ENCODE measurements at regions of chr9 and their contacts with region 1.

Region 1: GRCh38 chr9:94668418-94668932 is 29.2 kb upstream of the FBP1 start:
- DNase-seq: no peak
- H3K4me3 Mint-ChIP-seq: peak overlapping the region; percentile 22
- H3K27ac Mint-ChIP-seq: no peak overlapping the region
- H3K4me1 Mint-ChIP-seq: peaks cover 10% of the 10 kb centered on the region
- H3K27me3 Mint-ChIP-seq: peaks cover 40% of the 10 kb centered on the region

Region 2: DNA sequence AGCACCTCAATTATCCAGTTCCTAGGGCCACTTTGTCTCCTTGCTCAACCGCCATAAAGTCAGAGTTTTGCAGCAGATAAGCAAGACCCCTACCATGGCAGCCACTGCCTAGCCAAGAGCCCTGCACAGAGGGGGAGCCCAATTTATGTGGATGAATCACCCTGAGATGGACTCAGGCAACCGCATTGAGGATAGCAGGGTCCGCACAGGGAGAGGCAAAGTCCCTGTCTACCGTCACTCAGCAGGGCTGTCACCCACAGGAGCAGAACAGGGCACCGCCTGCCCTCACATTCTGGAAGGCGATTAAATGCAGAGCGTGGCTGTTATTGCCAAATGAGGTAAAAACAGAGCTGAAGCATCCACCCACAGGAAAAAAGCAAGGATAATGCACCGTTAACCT is 76.6 kb before region 1 on chr9:
- CTCF ChIA-PET with region 1: no interaction called
- POLR2A ChIA-PET with region 1: no interaction called
- DNase-seq: no peak
- H3K4me3 Mint-ChIP-seq: no peak overlapping the region
- H3K27ac Mint-ChIP-seq: no peak overlapping the region
- H3K4me1 Mint-ChIP-seq: peaks cover 5% of the 10 kb centered on the region
- H3K27me3 Mint-ChIP-seq: peaks cover 10% of the 10 kb centered on the region

Region 3: DNA sequence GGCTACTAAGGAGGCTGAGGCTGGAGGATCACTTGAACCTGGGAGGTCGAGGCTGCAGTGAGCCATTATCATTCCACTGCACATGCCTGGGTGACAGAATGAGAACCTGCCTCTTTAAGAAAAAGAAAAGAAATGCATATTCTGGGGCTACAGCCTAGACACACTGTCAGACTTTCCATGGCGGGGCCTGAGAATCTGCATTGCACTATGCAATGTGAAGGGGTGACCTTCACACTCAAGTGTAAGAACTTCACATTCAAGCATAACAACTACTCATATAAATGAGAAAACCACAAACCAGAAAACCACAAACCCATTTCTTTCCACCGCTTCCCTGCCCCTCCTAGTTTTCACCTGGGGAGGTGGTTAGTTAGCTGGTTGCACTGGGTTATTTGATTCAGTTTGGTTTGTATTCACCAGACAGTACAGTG is 56.8 kb before region 1 on chr9:
- CTCF ChIA-PET with region 1: no interaction called
- POLR2A ChIA-PET with region 1: no interaction called
- DNase-seq: peak; percentile 27
- H3K4me3 Mint-ChIP-seq: no peak overlapping the region
- H3K27ac Mint-ChIP-seq: no peak overlapping the region
- H3K4me1 Mint-ChIP-seq: peaks cover 8% of the 10 kb centered on the region
- H3K27me3 Mint-ChIP-seq: peaks cover 31% of the 10 kb centered on the region

Region 4: DNA sequence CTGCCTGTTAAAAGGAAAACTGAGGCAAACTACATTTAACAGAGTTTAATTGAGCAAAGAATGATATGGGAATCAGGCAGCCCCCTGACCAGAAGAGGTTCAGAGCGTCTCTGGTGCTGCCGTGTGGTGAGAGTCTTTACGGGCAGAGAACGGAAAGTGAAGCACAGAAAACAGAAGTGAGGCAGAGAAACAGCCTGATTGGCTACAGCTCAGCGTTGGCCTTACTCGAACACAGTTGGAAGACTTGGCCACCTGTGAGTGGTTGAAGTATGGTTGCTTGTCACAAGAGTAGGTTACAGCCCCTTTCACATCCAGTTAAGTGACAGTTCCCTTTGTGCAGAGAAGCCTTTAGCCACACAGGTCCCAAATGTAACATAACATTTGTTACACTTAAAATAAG is 12.3 kb before region 1 on chr9:
- CTCF ChIA-PET with region 1: interaction called, 14 read pairs
- POLR2A ChIA-PET with region 1: no interaction called
- DNase-seq: peak; percentile 52
- H3K4me3 Mint-ChIP-seq: peak overlapping the region; percentile 62
- H3K27ac Mint-ChIP-seq: peak overlapping the region; percentile 55
- H3K4me1 Mint-ChIP-seq: peaks cover 19% of the 10 kb centered on the region
- H3K27me3 Mint-ChIP-seq: peaks cover 19% of the 10 kb centered on the region

Region 5: DNA sequence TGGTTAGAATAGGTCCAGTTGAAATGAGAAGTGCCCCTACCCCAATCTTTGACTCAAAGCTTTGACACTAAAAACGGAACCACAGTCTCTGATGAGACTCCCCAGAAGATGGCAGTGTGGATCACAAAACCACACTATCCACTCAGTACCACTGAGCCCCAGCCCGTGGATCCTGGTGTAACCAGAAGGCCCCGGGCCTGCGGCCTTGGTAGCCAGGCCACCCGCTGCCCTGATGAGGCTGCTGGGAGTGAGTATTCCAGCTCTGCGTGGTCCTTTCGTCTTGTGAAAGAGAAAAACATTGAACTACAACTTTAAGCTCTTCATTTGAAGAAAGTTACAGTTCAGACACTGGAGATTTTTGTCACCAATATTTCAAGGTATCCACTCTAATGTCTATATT is 13.0 kb after region 1 on chr9:
- CTCF ChIA-PET with region 1: interaction called, 55 read pairs
- POLR2A ChIA-PET with region 1: interaction called, 3 read pairs
- DNase-seq: peak; percentile 60
- H3K4me3 Mint-ChIP-seq: no peak overlapping the region
- H3K27ac Mint-ChIP-seq: no peak overlapping the region
- H3K4me1 Mint-ChIP-seq: no peaks in the 10 kb centered on the region
- H3K27me3 Mint-ChIP-seq: peaks cover 44% of the 10 kb centered on the region

Region 6: GRCh38 chr9:94726495-94727191 is 58.2 kb after region 1 on chr9 and contains the start of gene AOPEP:
- CTCF ChIA-PET with region 1: interaction called, 18 read pairs
- POLR2A ChIA-PET with region 1: interaction called, 8 read pairs
- DNase-seq: peak; percentile 99
- H3K4me3 Mint-ChIP-seq: peak within 1 kb of the TSS; percentile 94
- H3K27ac Mint-ChIP-seq: peak within 1 kb of the TSS; percentile 86
- H3K4me1 Mint-ChIP-seq: peaks cover 20% of the 10 kb centered on the region
- H3K27me3 Mint-ChIP-seq: peaks cover 2% of the 10 kb centered on the region
- total RNA-seq, gene AOPEP: 13.5 to 17.0 TPM

Region 7: DNA sequence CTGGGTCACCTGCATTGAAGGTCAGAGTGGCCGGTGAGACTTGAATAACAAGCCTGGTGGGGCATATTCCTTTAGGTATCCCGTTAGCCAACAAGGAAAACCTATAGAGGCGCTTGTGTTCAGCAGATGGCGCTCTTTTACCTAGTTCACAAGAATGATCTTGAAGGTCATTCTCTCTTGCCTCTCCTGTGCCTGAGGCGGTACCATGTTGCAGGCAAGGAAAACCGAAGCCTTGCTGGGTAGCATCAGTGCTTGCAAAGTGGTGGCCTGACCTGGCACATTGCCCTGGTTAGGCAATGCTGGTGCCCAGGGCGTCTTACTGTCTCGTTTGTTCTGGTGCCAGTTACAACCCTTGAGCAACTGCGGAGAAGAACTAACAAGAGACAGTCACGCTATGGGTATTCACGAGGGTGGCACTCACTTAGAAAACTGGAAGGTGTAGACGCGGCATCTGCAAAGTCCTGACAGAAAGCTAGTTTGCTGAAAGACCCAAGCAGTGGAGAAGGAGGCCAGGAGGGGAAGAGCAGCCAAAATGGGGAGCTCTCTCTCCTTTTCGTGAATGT is 114.7 kb after region 1 on chr9:
- CTCF ChIA-PET with region 1: interaction called, 10 read pairs
- POLR2A ChIA-PET with region 1: no interaction called
- DNase-seq: peak; percentile 55
- H3K4me3 Mint-ChIP-seq: no peak overlapping the region
- H3K27ac Mint-ChIP-seq: no peak overlapping the region
- H3K4me1 Mint-ChIP-seq: peaks cover 16% of the 10 kb centered on the region
- H3K27me3 Mint-ChIP-seq: no peaks in the 10 kb centered on the region

Region 8: DNA sequence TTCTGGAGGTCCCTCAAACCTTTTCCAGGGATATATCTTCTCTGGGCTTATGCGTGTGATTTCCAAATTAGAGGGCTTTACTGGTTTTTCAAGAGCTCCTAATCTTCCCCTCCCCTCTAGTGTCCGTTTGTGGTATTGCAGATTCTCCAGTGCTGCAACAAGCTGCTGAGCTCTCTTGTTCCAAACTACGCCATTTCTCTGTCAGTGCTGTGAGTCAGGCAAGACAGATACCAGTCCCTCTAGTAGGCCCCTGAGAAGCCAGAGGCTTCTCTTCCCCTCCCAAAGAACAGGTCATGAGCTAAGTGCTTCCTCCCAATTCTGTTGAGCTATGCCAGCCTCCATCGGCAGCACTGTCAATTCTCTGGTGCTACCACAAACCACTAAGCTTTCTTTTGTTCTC is 499.5 kb after region 1 on chr9:
- CTCF ChIA-PET with region 1: interaction called, 13 read pairs
- POLR2A ChIA-PET with region 1: no interaction called
- DNase-seq: peak; percentile 69
- H3K4me3 Mint-ChIP-seq: no peak overlapping the region
- H3K27ac Mint-ChIP-seq: peak overlapping the region; percentile 17
- H3K4me1 Mint-ChIP-seq: peaks cover 34% of the 10 kb centered on the region
- H3K27me3 Mint-ChIP-seq: no peaks in the 10 kb centered on the region